ENCODE measurements at regions of chr3 and their contacts with region 1.

Region 1: DNA sequence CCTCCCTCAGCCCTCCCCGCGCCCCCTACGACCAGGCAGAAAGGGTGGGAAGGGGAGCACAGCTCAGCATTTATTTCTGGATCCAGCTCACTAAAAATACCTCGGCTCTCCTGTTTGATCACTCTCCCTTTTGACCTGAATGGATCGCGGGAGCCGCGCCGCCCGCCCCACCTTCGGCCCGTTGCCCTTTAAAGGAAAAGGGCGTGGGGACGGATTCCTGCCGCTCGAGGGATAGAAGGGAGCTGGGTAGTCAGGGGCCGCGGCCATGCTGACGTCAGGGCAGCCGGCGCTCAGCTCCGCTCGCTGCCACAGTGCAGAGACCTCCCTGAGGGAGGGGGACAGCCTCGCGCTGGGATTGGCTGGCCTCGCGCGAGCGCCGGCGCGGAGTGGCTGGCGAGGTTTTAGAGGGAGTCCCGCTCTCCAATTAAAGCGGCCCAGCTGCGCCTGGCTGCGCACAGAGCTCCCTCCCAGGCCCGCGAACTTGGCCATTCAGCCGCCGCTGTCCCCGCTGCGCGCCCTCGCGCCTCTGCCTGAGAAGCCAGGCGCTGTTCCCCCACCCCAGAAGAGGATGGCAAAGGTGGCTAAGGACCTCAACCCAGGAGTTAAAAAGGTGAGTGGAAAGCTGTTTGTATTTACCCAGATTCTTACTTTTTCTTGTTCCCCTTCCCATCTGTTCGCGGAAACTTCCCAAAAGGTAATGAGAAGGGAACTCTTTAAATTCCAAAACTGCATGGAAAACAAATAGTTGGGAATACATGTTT is at the start of gene LMCD1:
- DNase-seq: peak; percentile 89
- H3K4me3 ChIP-seq: peak within 1 kb of the TSS; percentile 64
- H3K27ac ChIP-seq: peak within 1 kb of the TSS; percentile 94
- H3K27me3 ChIP-seq: no peaks in the 10 kb centered on the region
- CTCF ChIP-seq: peak; percentile 38
- polyA plus RNA-seq, gene LMCD1: 39.1 and 49.5 TPM in 2 replicates

Region 2: DNA sequence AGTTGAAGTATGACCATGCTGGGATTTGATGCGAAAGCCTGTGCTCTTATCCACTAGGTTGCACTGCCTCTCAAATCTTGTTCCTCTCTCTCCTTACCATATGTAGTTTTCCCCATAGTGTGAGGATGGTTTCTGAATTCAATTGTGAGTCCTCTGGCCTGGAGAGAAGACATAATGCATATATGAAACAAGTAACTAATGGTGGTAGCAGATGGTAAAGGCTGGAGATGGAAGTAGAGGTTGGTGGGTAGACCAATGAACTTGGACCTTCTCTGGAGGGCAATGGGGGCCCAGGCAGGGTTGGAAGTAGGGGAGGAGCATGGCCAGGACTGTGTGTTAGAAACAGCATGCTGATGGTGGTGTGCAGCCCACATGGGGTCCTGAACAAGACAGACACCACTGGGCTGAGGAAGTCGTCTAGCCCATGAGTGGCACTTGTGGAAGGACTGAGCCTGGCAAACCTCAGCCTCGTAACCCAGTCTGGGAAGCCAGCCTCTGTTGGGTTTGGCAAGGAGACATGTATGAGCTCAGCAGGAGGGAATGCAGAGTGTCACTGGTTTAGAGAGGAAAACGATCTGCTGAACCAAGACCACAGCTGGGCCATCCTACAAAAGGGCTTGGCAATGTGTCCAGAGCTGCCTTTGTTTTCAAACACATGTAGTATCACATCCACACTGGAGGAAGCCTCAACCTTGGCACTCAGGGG is 18.4 kb before region 1 on chr3:
- CTCF ChIA-PET with region 1: interaction called, 3 read pairs
- POLR2A ChIA-PET with region 1: interaction called, 16 read pairs
- DNase-seq: peak; percentile 90
- H3K4me3 ChIP-seq: no peak overlapping the region
- H3K27ac ChIP-seq: peak overlapping the region; percentile 47
- H3K27me3 ChIP-seq: no peaks in the 10 kb centered on the region
- CTCF ChIP-seq: no peak